AG04450 (cell line): ENCODE measurements at regions of chr1 and their contacts with region 1.

Region 1: DNA sequence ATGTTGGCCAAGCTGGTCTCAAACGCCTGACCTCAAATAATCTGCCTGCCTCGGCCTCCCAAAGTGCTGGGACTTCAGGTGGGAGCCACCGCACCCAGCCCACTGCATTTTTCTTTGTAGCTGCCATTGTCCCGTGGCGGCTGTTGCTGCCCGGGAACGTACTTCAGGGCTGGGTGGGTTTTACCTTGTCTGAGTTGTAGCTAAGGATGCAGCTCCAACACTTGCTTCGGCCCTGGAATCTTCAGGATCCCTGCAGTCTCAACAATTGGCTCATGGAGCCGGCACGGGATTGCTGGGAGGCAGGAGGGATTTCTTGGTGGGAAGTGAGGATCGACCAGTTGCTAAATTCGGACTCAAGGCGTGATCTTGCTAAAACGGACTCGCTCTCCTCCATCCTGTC is 10.7 kb downstream of the TNFRSF8 start:
- DNase-seq: no peak
- H3K4me3 ChIP-seq: no peak overlapping the region
- H3K27ac ChIP-seq: no peak overlapping the region
- H3K27me3 ChIP-seq: peaks cover 17% of the 10 kb centered on the region
- CTCF ChIP-seq: no peak

Region 2: DNA sequence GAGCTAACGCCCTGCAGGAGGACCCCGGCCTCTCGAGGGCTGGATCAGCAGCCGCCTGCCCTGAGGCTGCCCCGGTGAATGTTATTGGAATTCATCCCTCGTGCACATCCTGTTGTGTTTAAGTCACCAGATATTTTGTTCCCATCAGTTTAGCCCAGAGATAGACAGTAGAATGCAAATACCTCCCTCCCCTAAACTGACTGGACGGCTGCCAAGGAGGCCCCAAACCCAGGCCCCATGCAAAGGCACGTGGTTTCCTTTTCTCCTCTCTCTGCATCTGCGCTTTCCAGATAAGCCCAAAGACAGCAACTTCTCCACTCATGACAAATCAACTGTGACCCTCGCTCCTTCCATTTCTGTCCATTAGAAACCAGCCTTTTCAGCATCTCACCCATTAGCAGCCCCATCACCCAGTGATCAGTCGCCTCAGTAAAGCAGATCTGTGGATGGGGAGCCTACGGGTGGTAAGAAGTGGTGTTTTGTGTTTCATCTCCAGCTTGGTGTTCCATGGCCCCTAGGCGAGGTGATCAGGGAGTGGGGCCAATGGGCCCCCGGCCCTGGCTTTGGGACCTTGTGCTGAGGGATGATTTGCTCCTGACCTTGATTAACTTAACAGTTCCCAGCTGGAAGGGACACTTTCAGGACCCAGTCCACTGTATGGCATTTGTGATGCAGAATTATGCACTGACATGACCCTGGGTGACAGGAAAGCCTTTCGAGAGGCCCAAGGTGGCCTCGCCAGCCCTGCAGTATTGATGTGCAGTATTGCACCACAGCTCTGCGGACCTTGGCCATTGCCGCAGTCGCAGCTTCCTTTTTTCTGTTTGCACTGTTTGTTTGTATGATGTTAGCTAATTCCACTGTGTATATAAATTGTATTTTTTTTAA is 231.4 kb before region 1 on chr1:
- CTCF ChIA-PET with region 1: no interaction called
- POLR2A ChIA-PET with region 1: no interaction called
- DNase-seq: no peak
- H3K4me3 ChIP-seq: no peak overlapping the region
- H3K27ac ChIP-seq: no peak overlapping the region
- H3K27me3 ChIP-seq: no peaks in the 10 kb centered on the region
- CTCF ChIP-seq: no peak

Region 3: GRCh38 chr1:11952455-11953109 is 121.2 kb before region 1 on chr1:
- CTCF ChIA-PET with region 1: no interaction called
- POLR2A ChIA-PET with region 1: no interaction called
- DNase-seq: no peak
- H3K4me3 ChIP-seq: no peak overlapping the region
- H3K27ac ChIP-seq: no peak overlapping the region
- H3K27me3 ChIP-seq: no peaks in the 10 kb centered on the region
- CTCF ChIP-seq: no peak

Region 4: DNA sequence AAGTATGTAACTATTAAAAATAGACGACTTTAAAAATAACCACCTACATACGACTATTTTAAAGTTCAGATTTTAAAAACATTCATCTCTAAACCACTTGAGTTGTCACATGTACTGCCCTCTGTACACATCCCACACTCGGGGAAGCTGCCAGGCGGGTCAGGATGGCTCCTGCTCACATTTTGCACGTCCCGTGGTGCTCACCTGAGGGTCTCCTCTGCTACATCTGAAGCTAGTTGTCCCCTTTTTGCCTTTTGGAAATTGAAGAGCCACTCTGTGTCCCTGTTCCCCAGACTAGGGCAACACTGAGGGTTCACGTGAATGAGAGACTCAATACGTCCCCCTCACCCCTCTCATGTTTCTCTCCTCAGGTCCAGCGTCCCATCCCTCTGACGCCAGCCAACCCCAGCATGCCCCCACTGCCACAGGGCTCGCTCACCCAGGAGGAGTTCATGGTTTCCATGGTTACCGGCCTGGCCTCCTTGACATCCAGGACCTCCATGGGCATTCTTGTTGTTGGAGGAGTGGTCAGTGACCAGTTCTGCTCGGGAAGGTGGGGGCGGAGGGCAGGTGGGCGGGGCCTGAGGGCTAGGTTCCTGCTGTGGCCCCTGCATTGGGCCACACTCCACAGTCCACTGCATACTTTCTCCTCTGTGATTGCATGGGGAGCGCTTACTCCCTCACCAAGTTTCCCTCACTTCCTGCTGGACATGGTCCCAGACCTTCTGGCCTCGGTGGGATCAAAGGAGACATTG is 67.5 kb before region 1 on chr1:
- CTCF ChIA-PET with region 1: no interaction called
- POLR2A ChIA-PET with region 1: interaction called, 10 read pairs
- DNase-seq: no peak
- H3K4me3 ChIP-seq: no peak overlapping the region
- H3K27ac ChIP-seq: no peak overlapping the region
- H3K27me3 ChIP-seq: no peaks in the 10 kb centered on the region
- CTCF ChIP-seq: no peak

Region 5: DNA sequence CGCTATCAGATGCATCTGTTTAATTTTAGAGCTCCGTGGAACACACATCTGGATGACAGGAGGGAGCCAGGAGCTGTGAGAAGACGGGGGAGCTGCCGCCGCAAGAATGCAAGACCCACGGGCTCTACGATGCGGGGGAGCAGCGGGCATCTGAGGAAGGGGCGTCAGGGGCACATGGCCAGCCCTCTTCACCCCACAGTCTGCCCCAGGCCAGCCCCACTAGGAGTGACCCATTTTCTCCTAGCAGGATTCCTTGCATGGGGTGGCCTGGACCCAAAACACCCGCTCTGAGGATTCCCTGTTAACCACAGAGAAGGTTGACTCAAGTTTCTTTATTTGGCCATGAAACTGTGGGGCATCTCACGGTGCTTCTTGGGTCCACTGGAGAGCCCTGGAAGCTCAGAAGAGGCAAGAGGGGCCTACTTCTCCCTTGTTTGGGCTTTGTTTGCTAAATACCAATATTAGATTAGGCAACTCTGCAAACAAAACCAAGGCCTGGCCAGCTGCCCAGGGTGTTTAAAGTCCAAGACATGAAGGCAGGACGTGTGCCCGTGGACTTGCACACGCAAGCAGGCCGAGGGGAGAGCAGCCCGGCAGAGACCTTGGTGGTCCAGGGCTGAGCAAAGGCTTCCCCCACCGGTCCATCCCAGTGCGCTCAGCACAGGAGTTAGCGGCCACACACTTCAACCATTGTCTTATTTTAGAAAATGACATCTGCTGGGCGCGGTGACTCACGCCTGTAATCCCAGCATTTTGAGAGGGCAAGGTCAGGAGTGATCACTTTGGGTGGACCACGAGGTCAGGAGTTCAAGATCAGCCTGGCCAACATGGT is 454.4 kb after region 1 on chr1:
- CTCF ChIA-PET with region 1: no interaction called
- POLR2A ChIA-PET with region 1: no interaction called
- DNase-seq: no peak
- H3K4me3 ChIP-seq: no peak overlapping the region
- H3K27ac ChIP-seq: no peak overlapping the region
- H3K27me3 ChIP-seq: no peaks in the 10 kb centered on the region
- CTCF ChIP-seq: no peak